Endothelial cell of umbilical vein (primary cell): ENCODE measurements at regions of chr12 and their contacts with region 1.

Region 1: DNA sequence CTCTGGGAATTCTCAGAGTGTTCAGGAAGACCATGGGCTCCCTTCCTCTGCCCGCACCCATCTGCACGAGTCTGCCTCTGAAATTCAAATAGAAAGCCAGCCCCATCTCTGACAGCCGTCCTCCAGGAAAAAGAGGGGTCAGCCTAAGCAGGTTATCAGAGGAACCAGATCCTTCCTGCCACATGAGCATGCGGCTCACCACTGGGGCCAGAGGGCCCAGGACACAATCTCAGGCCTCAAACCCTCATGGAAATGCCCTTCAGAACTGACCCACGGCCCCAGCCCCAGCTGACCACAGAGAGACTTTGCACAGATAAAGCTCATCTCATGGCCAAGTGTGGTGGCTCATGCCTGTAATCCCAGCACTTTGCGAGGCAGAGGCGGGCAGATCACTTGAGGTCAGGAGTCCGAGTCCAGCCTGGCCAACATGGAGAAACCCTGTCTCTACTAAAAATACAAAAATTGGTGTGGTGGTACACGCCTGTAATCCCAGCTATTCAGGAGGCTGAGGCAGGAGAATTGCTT is 23.2 kb downstream of the PXN start:
- DNase-seq: peak; percentile 96
- H3K4me3 ChIP-seq: no peak overlapping the region
- H3K27ac ChIP-seq: peak overlapping the region; percentile 83
- H3K4me1 ChIP-seq: peaks cover 82% of the 10 kb centered on the region
- H3K27me3 ChIP-seq: no peaks in the 10 kb centered on the region
- CTCF ChIP-seq: no peak
- POLR2A ChIP-seq: peak; percentile 91

Region 2: DNA sequence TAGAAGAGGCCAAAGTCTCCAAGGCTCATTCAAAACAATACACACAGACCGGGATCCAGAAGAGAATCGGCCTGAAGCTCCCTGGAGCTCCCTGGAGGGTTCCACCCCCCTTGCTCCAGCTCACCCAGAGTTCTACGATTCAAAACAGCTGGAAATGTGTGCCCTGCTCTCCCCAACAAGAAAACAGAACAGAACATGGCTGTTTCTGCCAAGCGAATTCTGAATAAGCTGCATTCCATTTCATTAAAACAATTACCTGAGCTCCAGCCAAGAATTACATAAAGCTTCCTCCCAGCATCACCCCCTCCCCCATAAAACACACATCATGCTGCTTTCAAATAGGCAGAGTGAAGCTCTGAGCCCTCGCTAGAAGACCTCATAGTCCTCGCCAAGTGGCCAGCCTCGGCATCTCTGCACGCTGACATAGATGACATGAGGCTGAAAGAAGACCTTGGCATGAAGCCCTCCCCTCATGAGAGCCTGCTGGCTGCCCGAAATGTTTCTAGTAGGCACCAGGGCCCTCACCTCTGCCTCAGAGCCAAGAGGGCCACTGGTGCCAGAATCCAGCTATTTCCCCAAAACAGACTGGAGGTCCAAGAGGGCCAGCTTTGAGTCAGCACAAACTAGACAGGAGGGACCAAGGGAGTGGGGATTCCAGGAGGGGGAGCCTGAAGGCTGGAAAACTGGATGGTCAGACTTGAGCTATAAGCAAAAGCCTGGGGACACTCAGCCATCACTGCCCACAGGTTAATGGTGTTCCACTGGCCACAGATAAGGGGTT is 14.9 kb after region 1 on chr12:
- CTCF ChIA-PET with region 1: interaction called, 906 read pairs
- POLR2A ChIA-PET with region 1: interaction called, 53 read pairs
- dilution Hi-C with region 1: no loop called
- intact Hi-C with region 1: loop called (anchors 1 kb)
- DNase-seq: peak; percentile 98
- H3K4me3 ChIP-seq: no peak overlapping the region
- H3K27ac ChIP-seq: peak overlapping the region; percentile 96
- H3K4me1 ChIP-seq: peaks cover 71% of the 10 kb centered on the region
- H3K27me3 ChIP-seq: no peaks in the 10 kb centered on the region
- CTCF ChIP-seq: no peak
- POLR2A ChIP-seq: peak; percentile 24